Activated B cell treated with CpG ODN at 0.5 μM for 24 hours (primary cell): ENCODE measurements at regions of chr2 and their contacts with region 1.

Region 1: DNA sequence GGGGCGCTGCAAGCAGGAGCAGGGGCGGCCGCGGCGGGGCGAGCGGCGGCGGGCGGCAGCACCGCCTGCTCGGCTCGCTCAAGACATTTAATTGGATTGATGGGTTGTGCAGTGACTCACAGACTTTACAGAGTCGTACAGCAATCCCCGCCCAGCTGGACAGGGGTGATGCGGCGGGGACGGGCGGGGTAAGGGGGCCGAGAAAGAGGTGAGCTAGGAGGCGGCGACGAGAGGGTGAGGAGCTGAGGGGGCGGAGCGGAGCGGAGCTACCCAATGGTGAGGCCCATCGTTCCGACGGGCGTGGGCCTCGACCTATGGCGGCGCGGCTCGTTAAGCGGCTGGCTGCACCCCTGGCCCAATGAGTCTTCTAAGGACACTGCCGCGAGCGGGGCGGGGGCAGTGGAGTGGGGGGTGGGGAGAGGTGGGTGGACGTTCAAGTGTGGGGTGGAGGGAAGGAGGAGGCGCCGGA is 97.1 kb upstream of the SERTAD2 start:
- DNase-seq: peak; percentile 92
- ATAC-seq: peak; percentile 82
- H3K4me3 Mint-ChIP-seq: peak overlapping the region; percentile 98
- H3K27ac Mint-ChIP-seq: peak overlapping the region; percentile 98
- H3K4me1 Mint-ChIP-seq: peaks cover 26% of the 10 kb centered on the region
- H3K27me3 Mint-ChIP-seq: no peaks in the 10 kb centered on the region
- CTCF ChIP-seq: no peak

Region 2: DNA sequence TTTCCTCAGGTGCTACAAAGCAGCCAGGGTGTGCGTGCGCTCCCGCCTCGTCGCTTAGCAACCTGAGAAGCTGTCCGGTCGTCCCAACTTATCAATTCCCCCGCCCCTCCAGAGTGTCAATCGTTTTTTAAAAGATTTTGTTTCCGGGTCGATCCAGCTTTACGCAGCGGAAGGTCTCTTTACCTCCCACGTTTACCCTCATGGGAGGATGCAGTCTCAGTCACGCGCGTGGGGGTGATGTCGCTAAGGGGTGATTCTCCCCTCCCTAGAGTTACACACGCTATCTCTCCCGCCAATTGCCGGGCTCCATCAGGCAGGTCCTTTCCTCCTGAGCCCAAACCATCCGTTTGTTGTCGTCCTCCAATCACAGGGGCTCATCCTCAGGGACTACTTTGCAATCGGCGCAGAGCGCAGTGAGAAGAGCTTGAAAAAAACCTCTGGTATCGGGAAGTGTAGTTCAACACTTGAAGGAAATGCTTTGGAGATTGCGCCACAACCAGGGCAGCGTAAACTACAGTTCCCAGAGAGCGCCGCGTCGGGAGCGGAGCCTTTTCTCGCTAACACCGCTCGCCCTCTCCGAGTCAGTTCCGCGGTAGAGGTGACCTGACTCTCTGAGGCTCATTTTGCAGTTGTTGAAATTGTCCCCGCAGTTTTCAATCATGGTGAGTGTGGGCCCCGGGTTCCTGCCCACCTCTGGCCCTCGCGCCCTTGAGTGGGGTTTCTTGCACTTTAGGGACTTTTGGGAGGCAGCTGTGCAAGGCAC is 1162.3 kb before region 1 on chr2 and contains the starts of genes MDH1 and WDPCP:
- CTCF ChIA-PET with region 1: no interaction called
- POLR2A ChIA-PET with region 1: no interaction called
- intact Hi-C with region 1: no loop called
- DNase-seq: peak; percentile 80
- ATAC-seq: peak; percentile 86
- H3K4me3 Mint-ChIP-seq: peak within 1 kb of the TSS; percentile 97
- H3K27ac Mint-ChIP-seq: peak within 1 kb of the TSS; percentile 97
- H3K4me1 Mint-ChIP-seq: peaks cover 47% of the 10 kb centered on the region
- H3K27me3 Mint-ChIP-seq: no peaks in the 10 kb centered on the region
- CTCF ChIP-seq: no peak
- total RNA-seq, gene MDH1: 117 and 120 TPM in 2 replicates
- total RNA-seq, gene WDPCP: 10.0 and 12.9 TPM in 2 replicates

Region 3: GRCh38 chr2:64609227-64609941 is 141.5 kb before region 1 on chr2:
- CTCF ChIA-PET with region 1: interaction called, 3 read pairs
- POLR2A ChIA-PET with region 1: interaction called, 29 read pairs
- intact Hi-C with region 1: loop called (anchors 1 kb)
- DNase-seq: peak; percentile 82
- ATAC-seq: peak; percentile 71
- H3K4me3 Mint-ChIP-seq: peak overlapping the region; percentile 84
- H3K27ac Mint-ChIP-seq: peak overlapping the region; percentile 77
- H3K4me1 Mint-ChIP-seq: peaks cover 34% of the 10 kb centered on the region
- H3K27me3 Mint-ChIP-seq: no peaks in the 10 kb centered on the region
- CTCF ChIP-seq: no peak

Region 4: DNA sequence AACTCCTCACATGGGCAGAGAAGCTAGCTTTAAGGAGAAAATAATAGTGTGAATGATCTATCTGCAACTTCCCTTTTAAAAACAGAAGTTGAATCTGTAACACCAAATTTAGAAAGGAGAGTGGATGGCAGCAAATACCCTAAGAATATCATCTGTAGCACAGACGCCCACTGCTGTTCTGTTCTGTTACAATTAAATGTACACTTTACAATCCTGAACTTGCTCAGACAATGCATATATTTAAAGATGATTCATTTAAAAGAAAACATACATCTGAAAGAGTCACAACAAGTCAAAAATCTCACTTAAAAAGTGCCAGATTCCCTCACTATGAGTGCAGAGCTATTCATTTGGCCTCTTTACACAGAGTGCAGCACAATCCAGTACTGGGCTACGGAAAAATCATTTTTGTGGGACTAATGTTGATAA is 89.1 kb before region 1 on chr2:
- CTCF ChIA-PET with region 1: interaction called, 5 read pairs
- POLR2A ChIA-PET with region 1: interaction called, 53 read pairs
- intact Hi-C with region 1: loop called (anchors 1 kb)
- DNase-seq: no peak
- ATAC-seq: peak; percentile 28
- H3K4me3 Mint-ChIP-seq: peak overlapping the region; percentile 56
- H3K27ac Mint-ChIP-seq: peak overlapping the region; percentile 88
- H3K4me1 Mint-ChIP-seq: peaks cover 72% of the 10 kb centered on the region
- H3K27me3 Mint-ChIP-seq: no peaks in the 10 kb centered on the region
- CTCF ChIP-seq: no peak

Region 5: DNA sequence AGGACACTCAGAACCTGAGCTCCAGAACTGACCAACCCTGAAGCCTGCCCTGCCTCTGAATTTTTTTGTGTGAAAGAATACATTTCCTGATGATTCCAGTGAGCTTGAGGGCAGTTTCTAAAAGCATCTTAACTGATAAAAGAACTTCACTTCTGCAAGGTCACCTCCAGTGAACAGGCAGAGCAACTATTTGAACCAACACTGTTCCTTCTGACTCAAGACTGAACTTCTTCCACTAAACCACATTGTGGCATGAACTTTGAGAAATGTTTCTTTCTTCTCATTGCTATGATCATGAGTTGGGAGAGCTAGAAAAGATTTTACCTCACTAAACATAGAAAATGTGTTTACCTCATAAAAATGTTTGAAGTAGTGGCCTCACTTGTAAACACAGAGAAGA is 13.3 kb before region 1 on chr2:
- CTCF ChIA-PET with region 1: interaction called, 3 read pairs
- POLR2A ChIA-PET with region 1: interaction called, 176 read pairs
- intact Hi-C with region 1: loop called (anchors 1 kb)
- DNase-seq: no peak
- ATAC-seq: no peak
- H3K4me3 Mint-ChIP-seq: no peak overlapping the region
- H3K27ac Mint-ChIP-seq: no peak overlapping the region
- H3K4me1 Mint-ChIP-seq: peaks cover 8% of the 10 kb centered on the region
- H3K27me3 Mint-ChIP-seq: no peaks in the 10 kb centered on the region
- CTCF ChIP-seq: no peak

Region 6: GRCh38 chr2:64839844-64840243 is 89.0 kb after region 1 on chr2:
- CTCF ChIA-PET with region 1: no interaction called
- POLR2A ChIA-PET with region 1: interaction called, 11 read pairs
- intact Hi-C with region 1: no loop called
- DNase-seq: no peak
- ATAC-seq: peak; percentile 92
- H3K4me3 Mint-ChIP-seq: peak overlapping the region; percentile 61
- H3K27ac Mint-ChIP-seq: peak overlapping the region; percentile 92
- H3K4me1 Mint-ChIP-seq: peaks cover 51% of the 10 kb centered on the region
- H3K27me3 Mint-ChIP-seq: no peaks in the 10 kb centered on the region
- CTCF ChIP-seq: no peak

Region 7: GRCh38 chr2:65056215-65057053 is 305.6 kb after region 1 on chr2 and contains the start of gene CEP68:
- CTCF ChIA-PET with region 1: no interaction called
- POLR2A ChIA-PET with region 1: interaction called, 8 read pairs
- intact Hi-C with region 1: loop called (anchors 1 kb)
- DNase-seq: peak; percentile 95
- ATAC-seq: peak; percentile 91
- H3K4me3 Mint-ChIP-seq: peak within 1 kb of the TSS; percentile 97
- H3K27ac Mint-ChIP-seq: peak within 1 kb of the TSS; percentile 95
- H3K4me1 Mint-ChIP-seq: peaks cover 75% of the 10 kb centered on the region
- H3K27me3 Mint-ChIP-seq: no peaks in the 10 kb centered on the region
- CTCF ChIP-seq: no peak
- total RNA-seq, gene CEP68: 16.6 and 17.9 TPM in 2 replicates